ENCODE measurements at regions of chr15 and their contacts with region 1.

Region 1: DNA sequence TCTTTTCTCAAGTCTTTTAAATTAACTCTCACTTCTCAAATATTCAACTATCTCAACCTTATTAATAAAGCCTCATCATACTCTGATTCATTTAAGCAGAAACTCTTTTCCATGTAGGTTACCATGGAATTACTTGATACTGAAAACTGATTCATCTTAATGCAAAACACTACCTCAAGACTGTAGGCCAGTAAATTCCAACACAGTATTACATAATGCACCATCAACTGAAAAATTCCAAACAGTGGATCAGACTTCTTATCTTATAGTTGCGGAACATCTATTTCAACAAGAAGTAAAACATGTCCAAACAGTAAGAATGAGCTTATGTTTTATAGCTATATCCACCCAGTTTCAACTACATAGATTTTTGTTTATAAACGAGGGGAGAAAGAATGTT is 124.5 kb downstream of the PEAK1 start:
- DNase-seq: no peak
- H3K4me3 ChIP-seq: no peak overlapping the region
- H3K27ac ChIP-seq: no peak overlapping the region
- H3K4me1 ChIP-seq: no peaks in the 10 kb centered on the region
- CTCF ChIP-seq: no peak

Region 2: GRCh38 chr15:76588811-76589747 is 706.4 kb before region 1 on chr15:
- CTCF ChIA-PET with region 1: no interaction called
- POLR2A ChIA-PET with region 1: no interaction called
- intact Hi-C with region 1: no loop called
- DNase-seq: no peak
- H3K4me3 ChIP-seq: no peak overlapping the region
- H3K27ac ChIP-seq: no peak overlapping the region
- H3K4me1 ChIP-seq: no peaks in the 10 kb centered on the region
- CTCF ChIP-seq: no peak

Region 3: GRCh38 chr15:76871930-76872329 is 423.5 kb before region 1 on chr15:
- CTCF ChIA-PET with region 1: no interaction called
- POLR2A ChIA-PET with region 1: no interaction called
- intact Hi-C with region 1: loop called (anchors 10 kb)
- DNase-seq: no peak
- H3K4me3 ChIP-seq: no peak overlapping the region
- H3K27ac ChIP-seq: no peak overlapping the region
- H3K4me1 ChIP-seq: no peaks in the 10 kb centered on the region
- CTCF ChIP-seq: no peak

Region 4: DNA sequence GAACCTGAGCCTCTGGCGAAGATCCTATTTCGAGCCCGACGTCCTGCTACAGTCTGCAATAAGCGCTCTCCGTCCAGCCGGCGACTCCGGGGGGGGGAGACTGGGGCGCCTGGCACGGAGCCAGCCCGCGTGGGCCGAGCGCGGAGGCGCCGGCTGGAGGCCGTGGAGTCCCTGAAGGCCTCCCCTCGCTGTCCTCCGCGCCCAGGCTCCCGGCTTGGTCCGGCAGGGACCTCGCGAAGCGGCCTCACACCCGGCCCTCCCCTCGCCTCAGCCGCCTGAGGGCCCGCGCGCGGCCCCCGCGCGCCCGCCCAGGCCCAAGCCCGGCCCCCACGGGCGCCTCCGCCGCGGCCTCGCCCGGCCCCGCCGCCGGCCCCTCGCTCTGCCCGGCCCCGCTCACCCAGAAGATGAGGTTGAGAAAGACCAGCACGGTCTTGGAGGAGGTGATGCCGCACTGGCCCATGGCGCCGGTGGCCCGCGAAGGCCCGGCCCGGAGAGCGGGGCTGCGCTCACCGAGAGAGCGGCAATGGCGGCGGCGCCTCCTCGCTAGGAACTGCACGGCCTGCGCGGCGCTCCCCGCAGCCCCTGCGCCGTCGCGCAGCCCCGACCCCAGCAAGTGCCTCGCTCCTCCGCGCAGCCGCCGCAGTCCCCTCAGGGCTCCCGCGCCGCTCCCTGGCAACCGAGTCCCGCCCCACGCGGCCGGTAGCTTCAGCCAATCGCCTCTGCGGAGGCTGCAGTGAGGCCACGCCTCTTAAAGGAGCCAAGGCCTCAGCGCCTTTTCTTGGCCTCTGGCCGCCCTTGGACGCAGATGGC is 224.7 kb before region 1 on chr15 and contains the start of gene TSPAN3:
- CTCF ChIA-PET with region 1: no interaction called
- POLR2A ChIA-PET with region 1: no interaction called
- intact Hi-C with region 1: no loop called
- DNase-seq: peak; percentile 94
- H3K4me3 ChIP-seq: peak within 1 kb of the TSS; percentile 71
- H3K27ac ChIP-seq: no peak within 1 kb of the TSS
- H3K4me1 ChIP-seq: peaks cover 25% of the 10 kb centered on the region
- CTCF ChIP-seq: no peak
- total RNA-seq, gene TSPAN3: 32.3 and 35.2 TPM in 2 replicates

Measured in OCI-LY7 (cell line).